ENCODE measurements at regions of chr16 and their contacts with region 1.

Region 1: GRCh38 chr16:58411742-58412614 is 19.7 kb downstream of the GINS3 start:
- DNase-seq: no peak
- H3K4me3 ChIP-seq: no peak overlapping the region
- H3K27ac ChIP-seq: no peak overlapping the region
- H3K27me3 ChIP-seq: no peaks in the 10 kb centered on the region
- CTCF ChIP-seq: no peak

Region 2: DNA sequence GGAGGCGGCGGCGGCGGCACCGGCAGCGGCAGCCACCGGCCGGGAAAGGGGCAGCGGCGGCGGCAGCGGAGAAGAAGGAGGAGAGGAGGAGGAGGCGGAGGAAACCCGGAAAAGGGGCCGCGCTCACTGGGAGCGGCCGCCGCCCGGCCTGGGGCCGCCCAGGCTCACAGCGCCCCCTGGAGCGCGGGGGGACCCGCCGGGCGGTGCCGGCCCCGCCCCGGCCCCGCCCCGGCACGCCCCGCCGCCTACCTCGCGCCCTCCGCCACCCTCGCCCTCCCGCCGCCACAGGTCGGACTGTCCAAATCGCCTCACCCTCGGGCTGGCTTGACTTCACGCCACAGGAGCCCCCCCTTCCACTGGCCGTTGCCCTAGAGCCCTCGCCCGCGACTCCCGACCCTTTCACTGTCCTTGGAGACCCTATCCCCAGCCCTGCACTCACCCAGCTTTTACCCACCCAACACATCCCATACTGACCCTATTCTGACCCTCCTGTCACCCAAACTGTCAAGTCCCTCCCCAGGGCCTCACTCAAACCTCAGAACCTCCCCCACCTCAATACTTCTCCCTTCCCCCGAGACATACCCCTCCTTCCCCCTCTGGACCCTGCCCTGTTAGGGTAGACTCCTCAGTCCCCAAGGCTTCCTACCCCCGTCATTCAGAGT is 213.8 kb before region 1 on chr16 and contains the start of gene CSNK2A2:
- intact Hi-C with region 1: no loop called
- DNase-seq: peak; percentile 30 to 76 (median 56)
- H3K4me3 ChIP-seq: peak within 1 kb of the TSS; percentile 51 to 88 (median 75)
- H3K27ac ChIP-seq: peak within 1 kb of the TSS in 5 of 59 donors; percentile 63 to 85 (median 71)
- H3K27me3 ChIP-seq: peaks cover 0 to 3% (median 0%) of the 10 kb centered on the region in 45 donors
- CTCF ChIP-seq: peak in 31 of 56 donors; percentile 13 to 60 (median 28)
- total RNA-seq, gene CSNK2A2: 39.0 to 73.3 (median 54.9) TPM

Region 3: DNA sequence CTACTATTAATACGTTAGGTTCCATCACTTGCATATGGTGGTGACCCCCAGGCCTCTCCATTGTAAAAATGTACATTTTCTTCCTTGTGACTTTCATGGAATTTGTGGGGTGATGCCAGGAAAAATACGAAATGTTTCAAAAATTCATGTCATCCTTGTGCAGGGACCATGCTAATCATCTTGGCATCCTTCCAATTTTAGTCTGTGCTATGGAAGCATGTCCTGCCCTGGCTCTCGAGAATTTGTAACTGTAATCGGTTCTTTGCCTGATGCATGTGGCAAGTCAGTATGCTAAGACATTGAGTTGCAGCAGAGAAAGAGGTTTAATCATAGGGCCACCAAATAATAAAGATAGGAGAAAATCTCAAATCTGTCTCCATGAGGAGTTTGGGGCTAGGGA is 34.0 kb before region 1 on chr16:
- intact Hi-C with region 1: loop called in 1 of 2 experiments (anchors 5 kb)
- DNase-seq: no peak
- H3K4me3 ChIP-seq: no peak overlapping the region
- H3K27ac ChIP-seq: no peak overlapping the region
- H3K27me3 ChIP-seq: no peaks in the 10 kb centered on the region
- CTCF ChIP-seq: no peak